Activated naive CD4-positive, alpha-beta T cell treated with anti-CD3 and anti-CD28 coated beads for 36 hours (primary cell): ENCODE measurements at regions of chr16 and their contacts with region 1.

Region 1: GRCh38 chr16:4616047-4616811 is 1.5 kb upstream of the UBALD1 start:
- DNase-seq: peak; percentile 100
- H3K4me3 Mint-ChIP-seq: peak overlapping the region; percentile 89
- H3K27ac Mint-ChIP-seq: peak overlapping the region; percentile 93
- H3K4me1 Mint-ChIP-seq: peaks cover 23% of the 10 kb centered on the region
- H3K27me3 Mint-ChIP-seq: no peaks in the 10 kb centered on the region

Region 2: GRCh38 chr16:4350787-4351659 is 265.2 kb before region 1 on chr16 and contains the start of gene PAM16:
- CTCF ChIA-PET with region 1: no interaction called
- intact Hi-C with region 1: loop called (anchors 10 kb)
- DNase-seq: peak; percentile 98
- H3K4me3 Mint-ChIP-seq: peak within 1 kb of the TSS; percentile 98
- H3K27ac Mint-ChIP-seq: peak within 1 kb of the TSS; percentile 84
- H3K4me1 Mint-ChIP-seq: peaks cover 40% of the 10 kb centered on the region
- H3K27me3 Mint-ChIP-seq: no peaks in the 10 kb centered on the region
- total RNA-seq, gene PAM16: 67.8 to 71.3 TPM

Region 3: DNA sequence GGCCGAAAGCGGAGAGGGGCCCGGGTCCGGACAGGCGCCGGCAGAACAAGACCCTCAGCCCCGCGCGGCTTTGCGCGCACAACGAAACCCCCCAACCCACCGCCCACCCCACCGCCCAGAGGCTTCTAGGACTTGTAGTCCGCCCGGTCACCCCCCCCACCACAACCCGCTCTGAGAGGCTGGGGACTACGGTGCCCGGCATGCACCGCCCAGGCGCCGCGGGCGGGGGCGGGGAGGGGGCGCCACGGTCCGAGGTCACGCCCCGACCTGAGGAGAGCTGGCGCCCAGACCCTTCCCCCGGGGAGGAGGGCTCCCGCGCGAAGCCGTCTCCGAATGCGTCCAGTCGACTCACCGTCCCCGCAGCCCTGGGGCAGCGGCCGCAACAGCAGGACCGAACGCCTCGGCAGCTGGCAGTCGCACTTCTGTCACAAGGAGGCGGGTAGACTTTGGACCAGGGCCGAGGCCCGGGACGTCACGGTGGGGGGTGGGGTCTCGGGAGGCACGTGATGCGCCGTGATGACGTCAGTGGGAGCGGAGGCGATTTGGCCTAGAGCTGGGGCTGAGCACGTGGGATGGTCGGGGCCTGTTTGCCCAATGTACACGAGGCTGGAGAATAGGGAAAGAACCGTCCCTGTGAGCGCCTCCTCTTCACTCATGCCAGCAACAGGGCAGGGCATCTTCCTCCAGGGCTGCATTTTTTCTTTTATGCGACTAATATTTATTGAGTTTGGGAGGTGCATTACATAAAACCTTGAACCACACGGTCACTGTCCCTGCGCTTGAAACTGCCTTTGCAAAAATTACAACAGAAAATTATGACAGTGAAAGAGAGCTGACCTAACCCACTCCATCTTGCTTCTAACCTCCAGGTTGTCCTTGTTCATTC is 77.6 kb before region 1 on chr16 and contains the start of gene CDIP1:
- CTCF ChIA-PET with region 1: interaction called, 3 read pairs
- intact Hi-C with region 1: loop called (anchors 1 kb)
- DNase-seq: peak; percentile 99
- H3K4me3 Mint-ChIP-seq: peak within 1 kb of the TSS; percentile 77
- H3K27ac Mint-ChIP-seq: peak within 1 kb of the TSS; percentile 54
- H3K4me1 Mint-ChIP-seq: peaks cover 41% of the 10 kb centered on the region
- H3K27me3 Mint-ChIP-seq: no peaks in the 10 kb centered on the region
- total RNA-seq, gene CDIP1: 31.9 to 35.7 TPM

Region 4: DNA sequence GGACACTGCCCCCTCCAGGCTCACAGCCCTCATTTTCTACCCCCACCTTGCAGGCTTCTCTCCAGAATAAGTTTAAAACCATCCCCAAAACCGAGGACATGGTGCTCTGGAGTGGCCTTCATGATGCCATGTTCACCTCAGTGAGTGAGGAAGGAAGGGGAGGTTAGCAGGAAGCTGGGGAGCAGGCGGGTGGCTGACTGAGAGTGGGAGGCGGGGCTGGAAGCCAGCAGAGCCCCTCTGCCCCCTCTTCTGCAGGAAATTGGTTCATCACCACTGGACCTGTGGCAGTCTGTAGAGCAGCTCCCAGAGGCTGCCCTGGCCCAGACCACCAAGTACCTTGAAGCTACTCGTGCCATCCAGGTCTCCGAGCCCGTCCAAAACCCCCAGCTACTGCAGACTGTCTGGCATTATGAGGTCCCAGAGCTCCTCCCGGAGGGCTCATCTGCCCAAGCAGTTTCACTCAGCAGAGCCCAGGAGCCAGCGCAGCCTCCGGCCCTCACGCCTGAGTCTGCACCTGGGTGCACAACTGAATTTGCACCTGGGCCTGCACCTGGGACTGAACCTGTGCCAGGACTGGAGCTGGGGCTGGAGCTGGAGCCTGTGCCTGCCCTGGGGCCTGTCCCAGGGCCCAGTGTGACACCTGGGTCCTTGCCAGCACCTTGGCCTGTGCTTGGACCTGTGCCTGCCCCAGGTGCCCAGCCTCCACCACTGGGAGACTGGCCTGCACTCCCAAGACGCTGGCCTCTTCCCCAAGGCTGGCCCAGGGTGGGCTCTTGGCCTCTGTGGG is 41.1 kb before region 1 on chr16:
- CTCF ChIA-PET with region 1: no interaction called
- intact Hi-C with region 1: no loop called
- DNase-seq: no peak
- H3K4me3 Mint-ChIP-seq: no peak overlapping the region
- H3K27ac Mint-ChIP-seq: no peak overlapping the region
- H3K4me1 Mint-ChIP-seq: no peaks in the 10 kb centered on the region
- H3K27me3 Mint-ChIP-seq: no peaks in the 10 kb centered on the region

Region 5: GRCh38 chr16:4601036-4601863 is 15.0 kb before region 1 on chr16:
- CTCF ChIA-PET with region 1: no interaction called
- intact Hi-C with region 1: no loop called
- DNase-seq: no peak
- H3K4me3 Mint-ChIP-seq: no peak overlapping the region
- H3K27ac Mint-ChIP-seq: no peak overlapping the region
- H3K4me1 Mint-ChIP-seq: no peaks in the 10 kb centered on the region
- H3K27me3 Mint-ChIP-seq: no peaks in the 10 kb centered on the region

Region 6: DNA sequence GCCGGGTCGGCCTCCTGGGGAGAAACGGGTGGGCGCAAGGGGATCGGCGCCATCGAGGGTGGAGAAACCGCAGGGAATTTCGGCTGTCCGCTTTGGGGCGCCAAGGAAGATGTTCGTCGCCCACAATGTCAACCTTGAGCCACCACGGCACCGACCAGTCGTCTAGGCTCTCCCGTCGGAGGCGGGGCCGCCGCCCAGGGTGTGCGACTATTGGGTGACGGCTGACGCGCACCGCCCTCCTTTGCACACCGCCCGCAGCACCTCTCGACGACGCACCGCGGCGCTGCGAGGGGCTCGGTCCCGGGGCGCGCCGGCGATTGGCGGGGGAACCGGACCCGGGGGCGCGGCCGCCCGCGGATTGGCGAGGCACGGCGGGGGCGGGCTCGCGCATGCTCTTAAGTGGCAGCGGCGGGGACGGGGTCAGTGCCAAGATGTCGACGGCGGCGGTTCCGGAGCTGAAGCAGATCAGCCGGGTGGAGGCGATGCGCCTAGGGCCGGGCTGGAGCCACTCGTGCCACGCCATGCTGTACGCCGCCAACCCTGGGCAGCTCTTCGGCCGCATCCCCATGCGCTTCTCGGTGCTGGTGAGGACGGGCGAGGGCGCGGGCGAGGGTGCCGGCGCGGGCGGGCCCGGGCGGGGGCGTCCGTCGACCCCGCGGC is 77.2 kb after region 1 on chr16 and contains the start of gene NUDT16L1:
- CTCF ChIA-PET with region 1: no interaction called
- intact Hi-C with region 1: loop called (anchors 1 kb)
- DNase-seq: peak; percentile 96
- H3K4me3 Mint-ChIP-seq: peak within 1 kb of the TSS; percentile 83
- H3K27ac Mint-ChIP-seq: peak within 1 kb of the TSS; percentile 65
- H3K4me1 Mint-ChIP-seq: peaks cover 14% of the 10 kb centered on the region
- H3K27me3 Mint-ChIP-seq: no peaks in the 10 kb centered on the region
- total RNA-seq, gene NUDT16L1: 20.0 to 20.7 TPM

Region 7: GRCh38 chr16:4802659-4803287 is 186.5 kb after region 1 on chr16:
- CTCF ChIA-PET with region 1: no interaction called
- intact Hi-C with region 1: loop called (anchors 2 kb)
- DNase-seq: peak; percentile 87
- H3K4me3 Mint-ChIP-seq: peak overlapping the region; percentile 77
- H3K27ac Mint-ChIP-seq: no peak overlapping the region
- H3K4me1 Mint-ChIP-seq: peaks cover 9% of the 10 kb centered on the region
- H3K27me3 Mint-ChIP-seq: no peaks in the 10 kb centered on the region